Right ventricle myocardium inferior (tissue), 1 donor: ENCODE measurements at regions of chr15 and their contacts with region 1.

Region 1: GRCh38 chr15:90931737-90932659 is at the start of gene HDDC3:
- DNase-seq: peak; percentile 95
- ATAC-seq: peak; percentile 65
- total RNA-seq, gene HDDC3: 18.9 TPM

Region 2: GRCh38 chr15:89893696-89894455 is 1038.1 kb before region 1 on chr15 and contains the start of gene AP3S2:
- intact Hi-C with region 1: loop called (anchors 10 kb)
- DNase-seq: peak; percentile 94
- ATAC-seq: peak; percentile 98
- total RNA-seq, gene AP3S2: 46.9 TPM

Region 3: GRCh38 chr15:90648137-90649070 is 283.6 kb before region 1 on chr15:
- intact Hi-C with region 1: loop called (anchors 2 kb)
- DNase-seq: peak; percentile 85
- ATAC-seq: peak; percentile 81

Region 4: GRCh38 chr15:90762109-90762508 is 169.9 kb before region 1 on chr15:
- intact Hi-C with region 1: loop called (anchors 5 kb)
- DNase-seq: peak; percentile 89
- ATAC-seq: peak; percentile 95

Region 5: DNA sequence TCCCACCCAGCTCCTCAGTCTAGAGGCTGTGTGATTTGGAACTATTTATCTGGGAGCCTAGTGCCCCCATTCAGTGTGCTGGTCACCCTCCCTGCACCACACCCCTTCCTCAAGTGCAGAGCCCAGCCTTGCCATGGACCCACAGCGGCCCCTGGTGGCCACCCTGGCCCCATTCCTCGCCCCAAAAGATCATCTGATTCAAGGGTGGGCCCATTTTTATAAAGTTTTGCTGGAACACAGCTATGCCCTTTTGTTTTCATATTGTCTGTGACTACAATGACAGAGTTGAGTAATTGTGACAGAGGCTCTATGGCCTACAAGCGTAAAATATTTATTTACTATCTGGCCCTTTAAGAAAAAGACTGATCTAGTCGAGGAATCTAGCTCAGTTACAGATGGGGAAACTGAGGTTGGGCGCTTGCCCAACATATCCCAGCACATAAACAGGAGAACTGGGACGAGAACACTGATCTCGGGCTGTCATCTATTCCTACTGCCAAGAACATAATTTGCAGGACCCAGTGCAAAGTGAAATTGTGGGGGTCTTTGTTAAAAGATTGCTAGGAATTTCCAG is 45.9 kb before region 1 on chr15:
- intact Hi-C with region 1: loop called (anchors 5 kb)
- DNase-seq: peak; percentile 90
- ATAC-seq: peak; percentile 62

Region 6: GRCh38 chr15:90902840-90903732 is 28.9 kb before region 1 on chr15 and contains the start of gene MAN2A2:
- intact Hi-C with region 1: loop called (anchors 1 kb)
- DNase-seq: peak; percentile 89
- ATAC-seq: peak; percentile 40
- total RNA-seq, gene MAN2A2: 133 TPM

Region 7: DNA sequence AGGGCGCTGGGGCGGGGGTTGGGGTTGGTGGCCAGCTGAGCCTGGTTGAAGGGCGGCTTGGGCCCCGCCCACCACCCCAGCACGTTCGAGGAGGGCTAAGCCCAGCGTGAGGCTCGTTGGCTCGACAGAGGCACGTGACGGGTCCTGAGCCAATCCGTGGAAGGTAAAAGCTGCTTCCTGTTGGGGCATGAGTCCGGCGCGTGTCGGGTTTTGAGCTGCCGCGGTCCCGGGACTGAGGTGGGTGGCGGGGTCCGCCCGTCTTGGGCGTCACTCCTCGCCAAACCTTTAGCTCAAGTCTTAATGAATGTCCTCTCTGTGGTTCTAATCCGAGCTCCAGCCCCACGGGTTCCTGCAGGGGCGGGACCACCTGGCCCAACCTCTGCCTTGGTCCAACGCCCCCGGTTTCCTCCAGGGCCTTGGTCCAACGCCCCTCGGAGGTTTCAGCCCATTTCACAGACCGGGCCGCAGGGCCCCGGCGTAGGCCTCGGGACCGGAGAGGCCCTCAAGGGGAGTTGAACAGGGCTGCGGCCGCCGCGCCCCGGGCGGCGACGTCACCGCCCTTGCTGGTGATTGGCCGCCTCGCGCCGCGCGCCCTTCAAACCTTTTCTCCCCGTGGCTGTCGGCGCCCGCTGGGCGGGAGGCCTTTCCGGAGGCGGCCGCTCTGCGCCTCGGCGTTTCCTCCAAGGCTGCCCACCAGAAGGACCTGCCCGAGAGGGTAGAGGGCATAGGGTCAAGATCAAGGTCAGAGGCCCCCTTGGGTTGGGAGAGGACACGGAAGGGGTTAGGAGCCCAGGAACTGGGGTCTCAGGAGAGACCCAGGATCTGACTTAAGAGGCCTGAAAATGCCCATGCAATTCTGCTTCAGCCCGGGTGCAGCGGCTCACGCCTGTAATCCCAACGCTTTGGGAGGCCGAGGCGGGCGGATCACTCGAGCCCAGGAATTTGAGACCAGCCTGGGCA is 23.0 kb after region 1 on chr15 and contains the start of gene RCCD1:
- intact Hi-C with region 1: no loop called
- DNase-seq: peak; percentile 98
- ATAC-seq: peak; percentile 93
- total RNA-seq, gene RCCD1: 9.0 TPM

Region 8: GRCh38 chr15:91068966-91069365 is 137.0 kb after region 1 on chr15:
- intact Hi-C with region 1: no loop called
- DNase-seq: no peak
- ATAC-seq: no peak